Uterus (tissue), 4 donors: ENCODE measurements at regions of chr2 and their contacts with region 1.

Region 1: GRCh38 chr2:197378494-197379307 is 56.1 kb downstream of the SF3B1 start:
- DNase-seq: peak; percentile 39 to 50
- H3K4me3 ChIP-seq: no peak overlapping the region
- H3K27ac ChIP-seq: peak overlapping the region; percentile 4 to 53
- H3K4me1 ChIP-seq: no peaks in the 10 kb centered on the region
- H3K27me3 ChIP-seq: no peaks in the 10 kb centered on the region
- CTCF ChIP-seq: peak; percentile 73 to 78 (median 76)
- POLR2A ChIP-seq: no peak

Region 2: GRCh38 chr2:197092431-197092830 is 286.3 kb before region 1 on chr2:
- intact Hi-C with region 1: no loop called
- DNase-seq: peak; percentile 66 to 83
- H3K4me3 ChIP-seq: no peak overlapping the region
- H3K27ac ChIP-seq: peak overlapping the region; percentile 61 to 82
- H3K4me1 ChIP-seq: no peaks in the 10 kb centered on the region
- H3K27me3 ChIP-seq: no peaks in the 10 kb centered on the region
- CTCF ChIP-seq: no peak
- POLR2A ChIP-seq: no peak

Region 3: DNA sequence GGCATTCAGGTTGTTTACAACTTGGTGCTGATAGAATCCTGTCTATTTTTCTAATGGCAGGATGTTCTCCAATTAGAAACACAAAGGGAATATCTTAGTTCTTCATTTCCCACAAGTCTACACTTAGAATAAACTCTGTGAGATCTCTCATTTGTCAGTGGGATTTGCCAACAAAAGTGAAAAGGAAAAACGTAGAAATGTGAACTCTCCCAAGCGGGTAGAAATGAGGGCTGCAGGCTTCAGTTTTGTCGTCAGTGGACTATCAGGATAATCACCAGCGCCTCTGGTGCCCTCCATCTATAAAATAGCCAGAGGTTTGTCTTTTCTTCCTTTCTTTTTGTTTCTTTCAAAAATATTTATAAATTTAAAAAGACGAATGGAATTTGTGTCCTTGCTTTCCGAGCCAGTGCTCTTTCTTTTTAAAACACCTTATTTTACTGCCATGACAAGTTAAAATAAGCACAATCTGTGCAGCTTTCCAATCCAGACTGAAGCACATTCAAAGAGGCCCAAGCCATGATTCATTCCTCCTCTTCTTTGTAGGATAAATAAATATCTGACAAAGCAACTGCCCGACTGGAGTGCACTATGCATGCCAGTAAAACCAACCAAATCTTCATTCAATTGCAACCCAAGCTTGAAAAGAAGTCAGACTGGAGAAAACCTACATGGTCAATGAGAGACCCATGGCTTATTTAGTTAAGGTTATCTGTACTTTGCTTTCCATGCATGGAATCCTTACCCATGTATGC is 253.9 kb before region 1 on chr2:
- intact Hi-C with region 1: loop called (anchors 10 kb)
- DNase-seq: no peak
- H3K4me3 ChIP-seq: no peak overlapping the region
- H3K27ac ChIP-seq: no peak overlapping the region
- H3K4me1 ChIP-seq: no peaks in the 10 kb centered on the region
- H3K27me3 ChIP-seq: no peaks in the 10 kb centered on the region
- CTCF ChIP-seq: no peak
- POLR2A ChIP-seq: no peak

Region 4: GRCh38 chr2:197442857-197443256 is 64.2 kb after region 1 on chr2:
- intact Hi-C with region 1: no loop called
- DNase-seq: no peak
- H3K4me3 ChIP-seq: no peak overlapping the region
- H3K27ac ChIP-seq: peak overlapping the region in 1 of 2 donors; percentile 33
- H3K4me1 ChIP-seq: no peaks in the 10 kb centered on the region
- H3K27me3 ChIP-seq: no peaks in the 10 kb centered on the region
- CTCF ChIP-seq: no peak
- POLR2A ChIP-seq: no peak

Region 5: DNA sequence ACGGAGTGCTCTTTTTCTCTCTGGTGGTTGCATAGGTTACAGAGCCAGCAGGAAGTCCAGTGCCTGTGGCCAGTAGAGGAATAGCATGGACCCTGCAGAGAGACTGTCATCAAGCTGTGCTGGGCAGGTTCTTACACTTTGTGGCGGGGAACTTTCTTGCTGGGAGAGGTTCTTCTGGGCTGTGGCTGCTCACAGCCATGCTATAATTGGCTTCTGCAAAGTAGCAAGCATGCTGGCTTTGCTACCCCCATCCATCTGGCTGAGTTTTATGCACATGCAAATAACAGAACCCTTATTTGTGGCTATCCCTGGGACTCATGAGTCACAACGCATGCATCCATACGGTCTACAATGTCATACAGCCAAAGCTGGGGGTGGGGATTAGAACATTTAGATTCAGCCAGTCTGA is 494.6 kb after region 1 on chr2:
- intact Hi-C with region 1: no loop called
- DNase-seq: no peak
- H3K4me3 ChIP-seq: no peak overlapping the region
- H3K27ac ChIP-seq: no peak overlapping the region
- H3K4me1 ChIP-seq: no peaks in the 10 kb centered on the region
- H3K27me3 ChIP-seq: no peaks in the 10 kb centered on the region
- CTCF ChIP-seq: no peak
- POLR2A ChIP-seq: no peak

Region 6: DNA sequence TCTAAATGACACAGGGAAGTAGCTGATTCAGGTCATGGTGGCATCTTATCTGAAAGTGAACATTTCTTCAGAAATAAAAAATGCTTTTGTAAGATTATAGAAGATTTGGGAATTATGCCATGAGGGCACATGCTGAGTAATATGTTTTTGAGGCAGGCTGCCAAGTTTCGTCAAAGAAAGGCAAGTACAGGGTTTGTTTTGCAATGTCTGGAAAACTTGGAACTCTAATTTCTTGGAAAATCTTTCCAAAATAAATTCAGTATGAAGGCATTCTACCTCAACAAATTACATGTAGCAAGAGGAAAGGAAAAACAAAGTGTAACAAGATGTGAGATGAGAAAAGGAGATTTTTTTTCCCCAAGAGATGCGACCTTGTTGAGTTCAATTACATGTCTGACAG is 593.4 kb after region 1 on chr2:
- intact Hi-C with region 1: no loop called
- DNase-seq: peak; percentile 20 to 65
- H3K4me3 ChIP-seq: no peak overlapping the region
- H3K27ac ChIP-seq: peak overlapping the region; percentile 5 to 47
- H3K4me1 ChIP-seq: peaks cover 7 to 21% of the 10 kb centered on the region in 2 donors
- H3K27me3 ChIP-seq: no peaks in the 10 kb centered on the region
- CTCF ChIP-seq: no peak
- POLR2A ChIP-seq: no peak